ENCODE measurements at regions of chr3 and their contacts with region 1.

Region 1: GRCh38 chr3:29409409-29409808 is 128.5 kb downstream of the RBMS3 start:
- DNase-seq: no peak
- ATAC-seq: no peak
- H3K4me3 ChIP-seq: no peak overlapping the region
- H3K27ac ChIP-seq: no peak overlapping the region
- H3K4me1 ChIP-seq: no peaks in the 10 kb centered on the region
- H3K27me3 ChIP-seq: no peaks in the 10 kb centered on the region
- CTCF ChIP-seq: no peak

Region 2: DNA sequence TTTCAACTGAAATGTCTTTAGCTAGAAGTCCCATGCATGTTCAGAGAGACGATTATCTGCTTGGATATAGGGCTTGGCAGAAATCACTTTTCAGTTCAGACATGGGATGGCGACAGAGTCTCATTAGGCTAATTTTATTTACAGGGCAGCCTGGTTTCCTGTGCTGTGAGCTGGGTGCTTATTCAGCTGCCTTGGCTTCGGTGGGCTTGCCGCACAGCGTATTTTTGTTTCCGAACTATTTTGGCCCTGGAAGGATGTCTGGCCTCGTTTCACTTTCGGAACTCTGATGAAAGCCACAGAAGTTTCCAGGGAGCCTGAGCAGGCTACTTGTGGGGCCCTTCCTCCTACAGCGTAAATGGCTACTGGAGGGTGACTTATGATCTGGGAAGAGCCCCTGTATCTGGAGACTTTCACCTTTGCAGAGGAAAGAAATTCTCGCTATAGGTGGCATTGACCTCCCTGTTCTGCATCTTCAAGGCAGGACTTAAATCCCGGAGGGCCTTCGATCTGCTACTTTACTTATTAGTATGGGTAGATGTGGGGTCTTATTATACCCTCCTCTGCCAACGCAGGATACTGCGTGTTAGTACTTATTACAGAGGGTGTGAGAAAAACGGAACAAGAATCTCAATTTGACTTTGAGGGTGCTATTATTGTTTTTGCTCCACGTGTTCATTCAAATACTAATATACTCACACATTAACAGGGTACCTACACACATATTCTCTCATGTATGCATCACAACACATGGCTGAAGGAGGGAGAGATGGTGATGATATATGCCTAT is 492.5 kb before region 1 on chr3:
- CTCF ChIA-PET with region 1: no interaction called
- POLR2A ChIA-PET with region 1: no interaction called
- intact Hi-C with region 1: loop called (anchors 10 kb)
- DNase-seq: peak; percentile 47
- ATAC-seq: peak; percentile 75
- H3K4me3 ChIP-seq: no peak overlapping the region
- H3K27ac ChIP-seq: no peak overlapping the region
- H3K4me1 ChIP-seq: 0 out of 2 replicates have a peak, but pooled peaks cover 4% of the 10 kb centered on the region
- H3K27me3 ChIP-seq: no peaks in the 10 kb centered on the region
- CTCF ChIP-seq: peak; percentile 29; the same call in 1 of the 2 replicates

Measured in PC-3 (cell line).